Activated CD4-positive, alpha-beta memory T cell treated with anti-CD3 and anti-CD28 coated beads for 36 hours (primary cell): ENCODE measurements at regions of chr11 and their contacts with region 1.

Region 1: DNA sequence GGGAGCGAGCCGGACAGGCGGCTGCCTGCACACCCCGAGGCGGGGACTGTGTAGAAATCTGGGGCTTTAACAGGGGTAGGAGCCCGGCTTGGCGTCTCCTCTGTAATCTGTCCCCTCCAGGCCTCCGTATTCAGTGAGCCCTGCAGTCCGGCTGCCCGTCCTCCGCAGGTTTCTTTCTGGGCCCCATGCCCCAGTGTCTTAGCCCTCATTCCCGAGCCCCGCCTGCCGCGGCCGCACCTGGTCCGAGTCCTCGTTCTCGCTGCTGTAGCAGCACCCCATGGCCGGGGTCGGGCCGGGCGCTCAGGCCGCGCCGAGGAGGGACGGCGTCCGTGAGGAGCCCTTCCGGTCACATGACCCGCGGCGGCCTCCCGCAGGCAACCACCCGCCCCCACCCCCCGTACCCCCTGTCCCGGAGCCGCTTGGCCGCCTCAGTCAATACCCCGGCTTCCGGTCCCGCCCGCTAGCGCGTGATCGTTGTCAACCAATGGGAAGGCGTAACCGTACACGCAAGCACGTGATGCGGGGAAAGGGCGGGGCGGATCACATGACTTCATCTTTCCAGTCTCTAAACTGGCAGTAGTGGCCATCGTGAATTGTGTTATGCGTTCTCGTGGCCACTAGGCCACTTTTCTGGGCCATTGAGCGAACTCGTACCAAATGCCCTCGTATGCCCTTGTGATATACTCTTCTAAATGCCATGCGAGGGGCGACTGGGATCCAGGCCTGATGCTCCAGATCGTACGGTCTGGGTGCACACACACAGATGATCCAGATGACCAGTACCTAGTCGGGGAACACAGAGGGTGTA is at the start of gene LAMTOR1:
- DNase-seq: peak; percentile 99
- H3K4me3 Mint-ChIP-seq: peak within 1 kb of the TSS; percentile 80
- H3K27ac Mint-ChIP-seq: peak within 1 kb of the TSS; percentile 83
- H3K4me1 Mint-ChIP-seq: peaks cover 37% of the 10 kb centered on the region
- H3K27me3 Mint-ChIP-seq: no peaks in the 10 kb centered on the region
- total RNA-seq, gene LAMTOR1: 54.3 to 56.2 TPM

Region 2: DNA sequence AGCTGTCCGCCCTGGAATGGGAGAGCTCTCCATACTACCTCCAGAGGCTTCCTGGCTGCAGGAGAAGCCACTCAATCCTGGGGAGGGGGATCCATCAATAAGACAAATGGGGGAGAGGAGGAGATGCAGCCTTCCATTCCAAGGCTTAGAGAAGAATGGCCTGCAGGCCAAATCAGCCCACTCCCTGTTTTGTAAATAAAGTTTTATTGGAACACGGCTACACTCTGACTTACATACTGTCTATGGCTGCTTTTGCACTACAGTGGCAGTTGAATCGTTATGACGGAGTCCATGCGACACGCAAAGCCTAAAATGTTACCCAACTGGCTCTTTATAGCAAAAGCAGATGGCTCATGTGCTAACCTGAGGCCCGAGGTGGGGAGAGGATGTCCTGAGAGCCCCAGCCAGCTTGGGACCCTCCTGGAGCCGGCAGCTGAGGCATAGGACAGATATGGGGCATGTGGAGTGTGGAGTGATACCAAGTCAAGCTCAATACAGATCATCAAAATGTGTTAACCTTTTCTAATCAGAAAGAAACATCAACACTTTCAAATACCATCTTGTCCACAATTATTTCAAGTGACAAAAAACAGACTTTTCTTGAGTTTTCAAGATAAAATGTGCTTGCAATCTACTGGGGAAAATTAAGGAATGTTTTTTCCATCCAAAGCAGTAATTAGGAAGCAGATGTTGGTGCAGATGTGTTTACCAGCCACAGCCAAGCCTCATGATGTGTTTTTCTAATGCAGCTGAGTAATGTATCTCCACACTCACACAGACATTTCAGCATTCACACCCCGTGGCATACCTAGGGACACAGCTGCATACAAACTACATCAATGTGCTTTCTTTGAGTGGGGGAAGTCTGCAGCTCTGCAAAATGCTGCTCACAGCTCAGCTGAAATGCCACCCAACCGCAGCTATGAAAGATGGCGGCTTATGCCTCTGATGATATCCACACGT is 1032.4 kb before region 1 on chr11:
- CTCF ChIA-PET with region 1: no interaction called
- POLR2A ChIA-PET with region 1: no interaction called
- intact Hi-C with region 1: no loop called
- DNase-seq: no peak
- H3K4me3 Mint-ChIP-seq: no peak overlapping the region
- H3K27ac Mint-ChIP-seq: no peak overlapping the region
- H3K4me1 Mint-ChIP-seq: no peaks in the 10 kb centered on the region
- H3K27me3 Mint-ChIP-seq: no peaks in the 10 kb centered on the region

Region 3: DNA sequence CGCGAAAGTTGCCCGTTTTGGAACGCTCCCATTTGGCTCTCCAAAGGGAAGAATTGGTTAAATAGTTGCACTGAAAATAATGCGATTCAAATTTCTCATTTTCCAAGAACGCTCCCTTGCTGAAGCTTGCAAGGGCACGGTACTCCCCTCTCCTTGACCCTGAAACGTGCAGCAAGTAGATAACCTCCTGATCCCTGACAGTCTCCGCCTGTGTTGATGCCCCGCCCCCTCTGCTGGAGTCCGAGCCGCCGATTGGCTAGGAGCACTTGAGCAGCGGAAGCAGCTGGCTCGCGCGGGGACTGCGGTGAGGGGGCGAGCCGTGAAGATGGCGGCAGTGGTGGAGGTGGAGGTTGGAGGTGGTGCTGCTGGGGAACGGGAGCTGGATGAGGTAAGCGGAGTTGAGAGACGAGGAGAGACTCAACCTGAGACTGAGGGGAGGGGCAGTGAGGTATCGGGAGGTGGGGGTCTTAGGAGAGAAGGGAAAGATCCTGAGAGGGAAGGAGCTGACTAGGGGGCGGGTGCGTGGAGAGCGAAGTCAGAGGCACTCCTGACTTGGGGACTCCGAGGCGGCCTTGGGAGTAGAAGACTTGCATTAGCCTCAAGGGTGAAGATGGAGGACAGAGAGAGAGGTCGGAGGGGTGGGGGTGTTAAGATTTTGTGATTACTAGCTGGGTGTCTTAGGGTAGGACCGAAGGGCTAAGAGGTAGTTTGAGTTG is 174.3 kb before region 1 on chr11 and contains the start of gene RNF121:
- CTCF ChIA-PET with region 1: no interaction called
- POLR2A ChIA-PET with region 1: no interaction called
- intact Hi-C with region 1: loop called (anchors 2 kb)
- DNase-seq: peak; percentile 99
- H3K4me3 Mint-ChIP-seq: peak within 1 kb of the TSS; percentile 86
- H3K27ac Mint-ChIP-seq: peak within 1 kb of the TSS; percentile 97
- H3K4me1 Mint-ChIP-seq: peaks cover 44% of the 10 kb centered on the region
- H3K27me3 Mint-ChIP-seq: no peaks in the 10 kb centered on the region
- total RNA-seq, gene RNF121: 34.9 to 37.1 TPM

Region 4: DNA sequence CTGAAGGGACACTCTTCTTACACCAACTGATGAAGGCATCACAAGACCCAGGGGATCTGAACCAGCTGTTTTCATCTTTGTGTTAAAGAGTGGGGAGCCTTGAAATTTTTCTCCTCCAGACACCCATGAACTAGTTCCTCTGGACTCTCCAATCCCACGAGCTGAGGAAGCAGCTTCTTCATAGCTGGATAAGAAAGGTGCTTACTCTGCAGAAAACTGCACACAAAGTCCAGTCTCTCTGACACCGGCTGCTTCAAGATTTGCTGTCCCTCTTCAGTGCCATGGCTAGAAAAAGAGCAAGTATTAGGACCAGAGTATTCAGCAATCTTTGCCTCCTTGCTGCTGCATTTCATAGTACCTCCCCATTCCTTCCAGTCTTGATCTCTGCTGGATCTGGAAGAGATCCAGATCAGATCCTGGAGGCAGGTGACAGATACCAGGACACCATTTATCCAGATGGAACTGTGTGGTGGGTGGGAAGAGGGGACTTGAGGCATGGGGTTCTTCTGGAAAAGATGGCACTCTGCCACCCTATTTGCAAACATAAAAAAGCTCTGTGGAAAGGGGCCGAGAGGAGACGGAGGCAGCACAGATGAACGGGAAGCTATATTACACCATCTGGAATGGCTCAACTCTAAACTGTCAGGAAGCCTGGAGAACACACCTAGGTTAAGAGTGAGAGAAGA is 78.9 kb before region 1 on chr11:
- CTCF ChIA-PET with region 1: interaction called, 14 read pairs
- POLR2A ChIA-PET with region 1: no interaction called
- intact Hi-C with region 1: no loop called
- DNase-seq: no peak
- H3K4me3 Mint-ChIP-seq: no peak overlapping the region
- H3K27ac Mint-ChIP-seq: peak overlapping the region; percentile 2
- H3K4me1 Mint-ChIP-seq: peaks cover 24% of the 10 kb centered on the region
- H3K27me3 Mint-ChIP-seq: no peaks in the 10 kb centered on the region

Region 5: DNA sequence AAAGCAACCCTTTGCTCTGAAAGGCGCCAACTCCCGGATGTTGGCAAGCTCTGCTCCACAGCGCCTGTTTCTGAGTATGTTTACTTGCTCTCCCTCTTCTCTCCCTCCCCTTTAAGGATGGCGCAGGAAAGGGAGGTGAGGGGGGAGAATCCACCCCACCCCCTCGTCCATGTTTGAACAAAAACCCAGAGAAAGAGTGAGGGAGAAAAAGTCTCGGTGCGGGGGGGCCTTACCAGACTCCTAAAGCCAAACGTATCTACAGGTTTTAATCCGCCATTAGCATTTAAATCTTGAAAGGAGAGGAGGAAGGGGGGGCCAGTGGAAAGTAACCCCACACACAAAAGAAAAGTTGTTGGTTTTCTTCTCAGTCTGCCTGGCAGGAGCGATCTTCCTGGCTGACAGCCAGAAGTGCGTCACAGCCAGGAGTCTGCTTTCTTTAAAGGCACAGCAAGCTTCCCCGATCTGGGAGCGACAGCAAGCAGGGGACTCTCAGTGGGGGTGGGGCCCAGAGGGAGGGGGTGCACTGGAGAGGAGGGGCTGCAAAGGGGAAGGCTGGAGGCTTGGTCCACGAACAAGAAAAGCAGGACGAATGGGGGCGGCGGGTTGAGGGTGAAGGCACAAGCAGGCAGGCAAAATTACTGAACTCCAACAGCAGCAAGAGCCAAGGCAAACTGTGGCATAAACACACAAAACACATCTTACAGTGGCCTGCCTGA is 62.3 kb before region 1 on chr11:
- CTCF ChIA-PET with region 1: no interaction called
- POLR2A ChIA-PET with region 1: interaction called, 5 read pairs
- intact Hi-C with region 1: loop called (anchors 1 kb)
- DNase-seq: peak; percentile 83
- H3K4me3 Mint-ChIP-seq: no peak overlapping the region
- H3K27ac Mint-ChIP-seq: no peak overlapping the region
- H3K4me1 Mint-ChIP-seq: peaks cover 34% of the 10 kb centered on the region
- H3K27me3 Mint-ChIP-seq: no peaks in the 10 kb centered on the region

Region 6: GRCh38 chr11:72091005-72091691 is 12.0 kb before region 1 on chr11:
- CTCF ChIA-PET with region 1: interaction called, 31 read pairs
- POLR2A ChIA-PET with region 1: no interaction called
- intact Hi-C with region 1: no loop called
- DNase-seq: peak; percentile 76
- H3K4me3 Mint-ChIP-seq: no peak overlapping the region
- H3K27ac Mint-ChIP-seq: no peak overlapping the region
- H3K4me1 Mint-ChIP-seq: peaks cover 11% of the 10 kb centered on the region
- H3K27me3 Mint-ChIP-seq: no peaks in the 10 kb centered on the region

Region 7: DNA sequence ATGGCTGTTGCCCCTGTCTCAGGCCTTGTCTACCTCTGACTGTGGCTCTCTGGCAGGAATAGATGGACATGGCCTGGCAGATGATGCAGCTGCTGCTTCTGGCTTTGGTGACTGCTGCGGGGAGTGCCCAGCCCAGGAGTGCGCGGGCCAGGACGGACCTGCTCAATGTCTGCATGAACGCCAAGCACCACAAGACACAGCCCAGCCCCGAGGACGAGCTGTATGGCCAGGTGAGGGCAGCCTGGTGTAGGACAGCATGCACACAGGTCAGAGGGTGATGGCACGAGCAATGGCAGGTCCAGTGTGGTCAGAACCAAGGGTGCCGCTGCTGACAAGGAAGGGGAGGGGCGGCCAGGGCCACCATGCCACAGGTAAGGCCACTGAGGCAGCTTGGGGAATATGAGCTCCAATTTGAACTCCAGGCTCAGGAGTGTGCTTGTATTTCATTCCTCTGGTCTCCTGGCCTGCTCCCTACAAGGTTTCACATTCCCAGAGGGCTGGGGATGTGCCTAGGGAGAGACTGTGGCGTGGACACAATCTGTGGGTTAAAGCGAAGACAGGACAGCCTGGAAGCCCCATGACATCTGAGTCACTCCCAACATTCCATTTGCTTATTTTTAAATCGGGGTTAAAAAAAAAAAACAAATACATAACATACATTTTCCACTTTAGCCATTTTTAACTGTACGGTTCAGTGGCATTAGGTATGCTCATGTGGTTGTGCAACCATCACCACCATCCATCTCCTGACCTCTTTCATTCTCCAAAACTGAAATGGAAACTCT is 32.9 kb after region 1 on chr11:
- CTCF ChIA-PET with region 1: no interaction called
- POLR2A ChIA-PET with region 1: no interaction called
- intact Hi-C with region 1: no loop called
- DNase-seq: no peak
- H3K4me3 Mint-ChIP-seq: no peak overlapping the region
- H3K27ac Mint-ChIP-seq: no peak overlapping the region
- H3K4me1 Mint-ChIP-seq: peaks cover 9% of the 10 kb centered on the region
- H3K27me3 Mint-ChIP-seq: peaks cover 13% of the 10 kb centered on the region

Region 8: GRCh38 chr11:72222907-72223614 is 119.9 kb after region 1 on chr11:
- CTCF ChIA-PET with region 1: interaction called, 3 read pairs
- POLR2A ChIA-PET with region 1: interaction called, 4 read pairs
- intact Hi-C with region 1: loop called (anchors 2 kb)
- DNase-seq: peak; percentile 95
- H3K4me3 Mint-ChIP-seq: peak overlapping the region; percentile 75
- H3K27ac Mint-ChIP-seq: peak overlapping the region; percentile 77
- H3K4me1 Mint-ChIP-seq: peaks cover 24% of the 10 kb centered on the region
- H3K27me3 Mint-ChIP-seq: peaks cover 5% of the 10 kb centered on the region